HepG2 (cell line): ENCODE measurements at regions of chr15 and their contacts with region 1.

Region 1: DNA sequence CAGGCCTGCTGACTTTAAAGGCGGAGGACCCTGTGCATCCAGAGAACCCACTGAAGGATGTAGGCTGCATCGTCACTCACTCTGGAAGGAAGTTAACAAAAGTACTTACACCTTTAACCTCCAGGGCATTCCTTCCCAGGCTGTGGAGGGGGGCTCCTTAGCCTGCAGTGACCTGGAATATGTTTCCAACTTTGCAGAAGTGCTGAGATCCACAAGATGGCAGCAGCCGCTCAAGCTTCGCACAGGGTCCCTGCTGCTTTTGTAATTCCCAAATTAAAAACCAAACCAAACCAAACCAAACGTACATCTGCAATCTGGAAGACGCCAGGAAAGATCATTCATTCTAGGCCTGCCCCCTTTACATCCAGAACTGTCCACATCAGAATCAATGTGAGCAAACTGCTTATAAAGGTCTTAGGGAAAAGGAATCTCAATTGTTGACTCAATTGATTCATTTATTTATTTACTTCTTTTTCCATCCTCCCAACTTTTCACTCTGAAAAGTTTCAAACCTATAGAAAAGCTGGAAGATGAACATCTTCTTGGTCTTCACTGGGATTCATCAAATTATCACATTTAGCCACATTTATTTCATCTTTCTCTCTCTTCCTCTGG is 70.5 kb upstream of the KLHL25 start:
- DNase-seq: peak; percentile 11
- ATAC-seq: peak; percentile 90
- H3K4me3 ChIP-seq: no peak overlapping the region
- H3K27ac ChIP-seq: no peak overlapping the region
- H3K4me1 ChIP-seq: no peaks in the 10 kb centered on the region
- H3K27me3 ChIP-seq: no peaks in the 10 kb centered on the region; a peak in 2 of 5 replicates
- CTCF ChIP-seq: peak; percentile 81
- EP300 ChIP-seq: no peak
- POLR2A ChIP-seq: no peak
- RAD21 ChIP-seq: peak; percentile 62

Region 2: GRCh38 chr15:85794603-85795336 is 70.4 kb before region 1 on chr15 and contains the start of gene KLHL25:
- CTCF ChIA-PET with region 1: no interaction called
- POLR2A ChIA-PET with region 1: no interaction called
- in situ Hi-C with region 1: no loop called
- intact Hi-C with region 1: no loop called
- DNase-seq: peak; percentile 90
- ATAC-seq: peak; percentile 95
- H3K4me3 ChIP-seq: peak within 1 kb of the TSS; percentile 80 to 95 (median 94)
- H3K27ac ChIP-seq: peak within 1 kb of the TSS; percentile 83
- H3K4me1 ChIP-seq: peaks cover 33% of the 10 kb centered on the region
- H3K27me3 ChIP-seq: no peaks in the 10 kb centered on the region; a peak in 1 of 5 replicates
- CTCF ChIP-seq: no peak
- EP300 ChIP-seq: no peak
- POLR2A ChIP-seq: peak; percentile 68 to 80
- RAD21 ChIP-seq: peak; percentile 45; the same call in 1 of the 2 replicates
- total RNA-seq, gene KLHL25: 7.4 and 8.2 TPM in 2 replicates

Region 3: DNA sequence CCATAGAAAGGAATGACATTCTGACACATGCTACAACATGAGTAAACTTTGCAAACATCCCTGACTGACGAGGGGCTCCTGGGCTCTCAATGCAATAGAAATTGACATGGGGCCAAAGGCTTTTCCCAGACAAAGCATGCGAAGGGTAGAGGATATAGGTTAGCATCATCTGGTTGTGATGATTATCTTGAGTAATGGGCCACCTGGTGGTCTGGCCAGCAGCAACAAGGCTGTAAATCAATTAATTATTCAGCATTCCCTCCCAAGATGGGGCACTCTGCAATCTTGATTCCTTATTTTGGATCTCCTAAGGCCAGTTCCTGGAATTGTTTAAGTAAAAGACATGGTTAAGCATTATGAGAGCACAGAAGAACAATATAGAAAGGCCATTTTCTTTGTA is 313.7 kb after region 1 on chr15:
- CTCF ChIA-PET with region 1: no interaction called
- POLR2A ChIA-PET with region 1: no interaction called
- in situ Hi-C with region 1: loop called (anchors 10 kb)
- intact Hi-C with region 1: no loop called
- DNase-seq: no peak
- ATAC-seq: no peak
- H3K4me3 ChIP-seq: no peak overlapping the region
- H3K27ac ChIP-seq: no peak overlapping the region
- H3K4me1 ChIP-seq: no peaks in the 10 kb centered on the region
- H3K27me3 ChIP-seq: no peaks in the 10 kb centered on the region
- CTCF ChIP-seq: peak; percentile 31; the same call in 1 of the 2 replicates
- EP300 ChIP-seq: no peak
- POLR2A ChIP-seq: no peak
- RAD21 ChIP-seq: no peak

Region 4: DNA sequence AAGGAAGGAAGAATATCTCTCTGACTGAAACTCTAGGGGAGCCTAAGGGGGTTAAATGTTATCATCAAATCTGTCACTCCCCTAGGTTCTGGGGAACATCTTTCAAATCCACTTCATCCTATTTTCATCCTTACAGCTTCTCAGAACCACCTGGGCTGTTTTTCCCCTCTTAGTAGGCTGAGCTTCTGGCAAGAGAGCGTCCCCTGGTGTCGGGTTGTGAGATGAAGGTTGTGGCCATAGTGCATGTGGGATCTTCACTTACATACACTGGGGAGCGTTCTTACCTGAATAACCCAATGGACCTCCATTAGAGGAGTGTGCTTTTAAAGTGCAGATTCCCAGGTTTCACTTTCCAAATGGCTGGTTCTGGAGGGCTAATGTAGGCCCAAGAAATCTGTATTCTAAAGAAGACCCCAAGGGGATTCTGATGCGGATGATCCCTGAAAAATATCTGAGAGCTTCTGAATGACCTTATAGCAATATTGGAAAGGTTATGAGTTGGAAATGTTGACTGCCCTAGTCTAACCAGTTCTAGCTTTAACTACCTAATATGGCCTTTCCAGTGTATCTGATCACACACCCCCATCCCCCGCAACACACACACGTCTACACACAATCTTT is 878.2 kb after region 1 on chr15:
- CTCF ChIA-PET with region 1: no interaction called
- POLR2A ChIA-PET with region 1: no interaction called
- in situ Hi-C with region 1: loop called (anchors 10 kb)
- intact Hi-C with region 1: loop called (anchors 2 kb)
- DNase-seq: peak; percentile 1
- ATAC-seq: no peak
- H3K4me3 ChIP-seq: no peak overlapping the region
- H3K27ac ChIP-seq: no peak overlapping the region
- H3K4me1 ChIP-seq: no peaks in the 10 kb centered on the region
- H3K27me3 ChIP-seq: no peaks in the 10 kb centered on the region
- CTCF ChIP-seq: peak; percentile 36; the same call in 1 of the 2 replicates
- EP300 ChIP-seq: no peak
- POLR2A ChIP-seq: no peak
- RAD21 ChIP-seq: no peak